ENCODE measurements at regions of chr15 and their contacts with region 1.

Region 1: GRCh38 chr15:94306700-94307650 is 75.6 kb downstream of the MCTP2 start:
- DNase-seq: peak; percentile 49
- H3K4me3 Mint-ChIP-seq: no peak overlapping the region
- H3K27ac Mint-ChIP-seq: peak overlapping the region; percentile 87
- H3K4me1 Mint-ChIP-seq: peaks cover 44% of the 10 kb centered on the region
- H3K27me3 Mint-ChIP-seq: no peaks in the 10 kb centered on the region

Region 2: DNA sequence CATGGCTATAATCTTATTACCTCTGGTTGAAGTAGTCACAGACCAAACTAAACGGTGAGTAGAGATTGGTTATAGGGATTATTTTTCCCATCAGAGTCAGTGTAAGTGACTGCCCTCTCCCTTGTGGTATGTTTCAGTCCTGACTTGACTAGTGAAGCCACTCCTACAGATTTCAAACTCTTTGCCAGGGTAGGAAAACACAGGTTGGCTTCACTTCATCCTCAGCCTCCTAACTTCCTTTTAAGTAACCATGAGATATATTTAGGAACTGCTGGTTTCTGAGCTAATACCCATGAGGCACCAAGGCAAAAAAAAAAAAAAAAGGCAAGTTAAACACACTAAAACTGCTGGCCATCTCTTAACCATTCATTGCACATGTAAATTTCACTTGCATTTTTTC is 424.8 kb before region 1 on chr15:
- CTCF ChIA-PET with region 1: no interaction called
- intact Hi-C with region 1: no loop called
- DNase-seq: no peak
- H3K4me3 Mint-ChIP-seq: no peak overlapping the region
- H3K27ac Mint-ChIP-seq: no peak overlapping the region
- H3K4me1 Mint-ChIP-seq: no peaks in the 10 kb centered on the region
- H3K27me3 Mint-ChIP-seq: peaks cover 2% of the 10 kb centered on the region

Region 3: DNA sequence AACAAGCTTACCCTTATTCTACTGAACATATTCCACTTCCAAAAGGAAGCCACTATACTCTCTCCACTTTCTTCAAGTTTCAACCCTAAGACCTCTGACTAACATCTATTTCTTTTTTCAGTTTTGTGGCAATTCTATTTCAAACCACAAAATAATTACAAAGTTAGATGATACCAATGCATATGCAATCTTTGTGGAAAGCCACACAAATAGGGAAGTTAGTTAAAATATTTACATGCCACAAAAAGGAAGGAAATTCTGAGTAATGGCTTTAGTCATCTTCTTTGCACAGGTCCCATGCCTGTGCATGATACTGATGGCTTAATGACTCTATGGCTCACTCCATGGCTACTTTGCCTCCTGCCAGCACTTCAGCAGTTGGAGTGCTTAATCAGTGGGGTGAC is 132.6 kb before region 1 on chr15:
- CTCF ChIA-PET with region 1: no interaction called
- intact Hi-C with region 1: loop called (anchors 1 kb)
- DNase-seq: peak; percentile 26
- H3K4me3 Mint-ChIP-seq: no peak overlapping the region
- H3K27ac Mint-ChIP-seq: peak overlapping the region; percentile 10
- H3K4me1 Mint-ChIP-seq: peaks cover 19% of the 10 kb centered on the region
- H3K27me3 Mint-ChIP-seq: peaks cover 6% of the 10 kb centered on the region

Region 4: DNA sequence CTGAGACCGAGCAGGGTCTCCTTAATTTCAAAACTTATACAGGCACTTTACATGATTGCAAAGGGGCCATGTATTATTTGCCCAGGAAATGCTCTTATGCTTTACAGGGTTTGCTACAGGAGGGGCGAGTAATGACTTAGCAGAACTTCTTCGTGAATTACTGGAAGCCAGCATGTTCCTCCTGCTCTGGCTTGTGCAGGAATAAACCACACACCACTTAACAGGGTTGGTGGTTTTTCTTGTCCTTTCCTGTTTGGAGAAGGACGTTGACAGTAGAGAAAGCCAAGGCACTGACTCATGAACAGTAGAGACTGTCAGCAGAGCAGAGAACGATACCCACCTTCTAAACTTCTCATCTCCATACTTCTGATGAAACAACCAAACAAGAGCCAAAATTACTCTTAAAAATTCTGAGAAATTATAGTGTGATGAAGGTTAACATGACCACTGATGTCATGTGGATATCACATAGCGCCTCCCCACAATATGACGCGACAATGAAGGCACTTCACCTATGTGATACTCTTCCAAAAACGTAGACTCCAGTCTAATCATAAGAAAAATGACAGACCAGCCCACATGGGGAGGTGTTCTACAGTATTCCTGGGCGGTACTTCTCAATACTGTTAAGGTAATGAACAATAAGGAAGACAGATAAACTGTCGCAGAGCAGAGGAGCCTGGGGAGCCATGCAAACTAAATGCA is 100.4 kb before region 1 on chr15:
- CTCF ChIA-PET with region 1: no interaction called
- intact Hi-C with region 1: loop called (anchors 1 kb)
- DNase-seq: peak; percentile 70
- H3K4me3 Mint-ChIP-seq: no peak overlapping the region
- H3K27ac Mint-ChIP-seq: peak overlapping the region; percentile 69
- H3K4me1 Mint-ChIP-seq: peaks cover 15% of the 10 kb centered on the region
- H3K27me3 Mint-ChIP-seq: peaks cover 24% of the 10 kb centered on the region

Region 5: GRCh38 chr15:94274745-94275144 is 32.2 kb before region 1 on chr15:
- CTCF ChIA-PET with region 1: interaction called, 3 read pairs
- intact Hi-C with region 1: loop called (anchors 2 kb)
- DNase-seq: no peak
- H3K4me3 Mint-ChIP-seq: no peak overlapping the region
- H3K27ac Mint-ChIP-seq: no peak overlapping the region
- H3K4me1 Mint-ChIP-seq: peaks cover 29% of the 10 kb centered on the region
- H3K27me3 Mint-ChIP-seq: no peaks in the 10 kb centered on the region

Region 6: GRCh38 chr15:94287794-94288246 is 19.2 kb before region 1 on chr15:
- CTCF ChIA-PET with region 1: interaction called, 5 read pairs
- intact Hi-C with region 1: loop called (anchors 1 kb)
- DNase-seq: peak; percentile 71
- H3K4me3 Mint-ChIP-seq: no peak overlapping the region
- H3K27ac Mint-ChIP-seq: no peak overlapping the region
- H3K4me1 Mint-ChIP-seq: peaks cover 37% of the 10 kb centered on the region
- H3K27me3 Mint-ChIP-seq: peaks cover 3% of the 10 kb centered on the region

Region 7: DNA sequence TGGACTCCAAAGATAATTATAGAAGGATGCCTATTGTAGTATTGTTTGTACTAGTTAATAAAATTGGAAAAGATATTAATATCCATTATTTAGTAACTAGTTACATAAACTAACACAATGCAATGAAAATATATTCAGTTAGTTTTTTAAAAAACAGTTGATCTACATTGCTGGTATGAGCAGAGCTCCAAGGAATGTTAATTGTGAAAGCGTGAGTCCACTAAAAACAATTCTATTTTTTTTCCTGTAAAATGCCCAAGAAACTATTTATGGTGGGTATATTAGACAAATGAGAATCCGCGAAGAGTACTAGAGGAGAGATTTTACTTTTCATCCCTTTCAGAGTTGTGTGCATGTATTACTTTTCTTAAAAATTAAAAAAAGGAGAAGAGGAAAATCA is 28.6 kb after region 1 on chr15:
- CTCF ChIA-PET with region 1: no interaction called
- intact Hi-C with region 1: no loop called
- DNase-seq: no peak
- H3K4me3 Mint-ChIP-seq: no peak overlapping the region
- H3K27ac Mint-ChIP-seq: no peak overlapping the region
- H3K4me1 Mint-ChIP-seq: no peaks in the 10 kb centered on the region
- H3K27me3 Mint-ChIP-seq: no peaks in the 10 kb centered on the region